BJ (cell line): ENCODE measurements at regions of chr6 and their contacts with region 1.

Region 1: DNA sequence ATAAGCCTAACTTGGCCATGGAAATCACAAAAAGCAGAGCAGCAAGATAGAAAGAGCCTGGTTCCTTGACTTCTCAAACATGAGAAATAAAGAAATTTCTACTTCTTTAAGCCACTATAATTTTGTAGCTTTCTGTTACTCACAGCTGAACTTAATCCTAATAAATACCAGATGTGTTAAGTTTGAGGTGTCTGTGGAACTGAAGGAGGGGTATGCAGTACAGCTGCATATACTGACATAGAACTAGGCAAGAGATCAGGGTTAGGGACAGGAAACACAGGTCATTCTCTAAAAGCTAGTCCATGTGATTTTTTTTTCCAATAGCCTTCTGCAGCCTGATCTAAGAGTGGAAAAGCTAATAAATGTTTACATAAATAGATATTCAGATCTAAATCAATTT is 123.9 kb downstream of the COL12A1 start:
- DNase-seq: peak; percentile 13
- H3K4me3 ChIP-seq: no peak overlapping the region
- H3K27me3 ChIP-seq: no peaks in the 10 kb centered on the region
- CTCF ChIP-seq: no peak

Region 2: DNA sequence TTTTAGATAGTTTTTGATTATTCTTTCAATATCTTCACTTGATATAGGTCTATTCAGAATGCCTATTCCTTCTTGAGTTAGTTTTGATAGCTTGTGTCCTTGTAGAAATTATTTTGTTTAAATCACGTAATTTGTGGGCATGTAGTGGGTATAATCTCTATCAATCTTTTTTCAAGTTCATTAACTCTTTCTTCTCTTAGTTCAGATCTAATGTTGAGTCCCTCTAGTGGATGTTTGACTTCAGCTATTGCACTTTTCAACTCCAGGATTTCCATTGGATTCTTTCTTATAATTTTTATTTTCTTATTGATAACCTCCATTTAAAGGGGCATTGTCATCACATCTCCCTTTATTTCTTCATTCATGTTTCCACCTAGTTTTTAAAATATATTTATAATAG is 11.7 kb before region 1 on chr6:
- CTCF ChIA-PET with region 1: interaction called, 12 read pairs
- POLR2A ChIA-PET with region 1: no interaction called
- DNase-seq: no peak
- H3K4me3 ChIP-seq: no peak overlapping the region
- H3K27me3 ChIP-seq: no peaks in the 10 kb centered on the region
- CTCF ChIP-seq: no peak